ENCODE measurements at regions of chr6 and their contacts with region 1.

Region 1: DNA sequence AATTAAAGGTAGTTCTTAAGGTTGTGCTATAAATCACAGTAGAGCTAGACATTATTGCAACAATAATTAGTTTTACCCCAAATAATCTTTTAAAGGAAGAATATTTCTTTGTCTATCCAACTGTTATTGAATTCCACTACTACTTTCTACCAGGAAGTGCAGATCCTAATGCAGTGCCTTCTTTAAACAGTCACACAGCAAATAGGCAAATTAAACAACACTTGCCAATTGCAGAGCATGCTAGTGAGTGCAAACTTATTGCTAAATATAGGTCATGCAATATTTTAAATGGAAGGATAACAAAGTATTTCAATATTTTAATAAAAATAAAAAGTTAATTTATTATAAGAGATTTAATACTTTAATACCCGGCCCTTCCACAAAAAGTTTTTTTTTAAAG is 107.3 kb upstream of the BCLAF1 start:
- DNase-seq: no peak
- H3K4me3 ChIP-seq: no peak overlapping the region
- H3K27ac ChIP-seq: no peak overlapping the region
- H3K4me1 ChIP-seq: no peaks in the 10 kb centered on the region
- H3K27me3 ChIP-seq: no peaks in the 10 kb centered on the region
- CTCF ChIP-seq: no peak
- POLR2A ChIP-seq: no peak

Region 2: DNA sequence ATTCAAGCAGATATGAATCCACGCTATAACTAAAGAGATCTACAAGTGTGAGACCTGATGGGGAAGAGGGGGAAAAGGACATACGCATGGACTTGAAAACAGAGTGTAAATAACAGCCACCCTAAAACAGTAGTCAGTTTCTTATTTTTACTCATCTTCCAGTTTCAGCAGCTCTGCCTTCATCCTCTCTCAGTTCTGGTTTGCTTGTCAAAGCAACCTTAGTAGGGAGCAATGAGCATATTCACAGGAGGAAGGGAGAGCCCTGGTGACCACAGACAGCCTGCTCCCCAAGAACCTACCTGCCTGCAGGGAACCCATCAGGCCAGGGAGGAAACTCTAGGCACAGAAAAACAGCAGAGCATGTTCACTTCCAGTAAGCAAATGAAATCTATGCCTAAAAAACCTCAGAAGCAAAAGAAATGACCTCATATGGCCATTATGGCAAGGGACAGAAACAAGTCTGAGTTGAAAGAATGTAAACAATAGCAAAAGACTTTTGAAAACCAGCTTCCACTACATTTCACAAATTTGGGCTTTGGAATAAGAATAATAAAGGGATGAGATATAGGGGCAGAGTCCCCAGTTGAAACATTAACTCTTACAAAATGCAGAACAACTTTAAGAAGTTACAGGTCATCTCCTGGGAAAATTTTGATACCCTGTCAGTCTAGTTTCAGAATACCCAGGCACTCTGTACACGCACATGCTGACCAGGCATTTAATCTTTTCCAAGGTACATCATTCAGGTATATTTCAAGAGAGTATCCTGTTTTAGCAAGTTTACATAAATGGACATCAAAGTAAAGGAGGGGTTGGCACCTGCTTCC is 13.5 kb after region 1 on chr6:
- intact Hi-C with region 1: loop called (anchors 2 kb)
- DNase-seq: no peak
- H3K4me3 ChIP-seq: no peak overlapping the region
- H3K27ac ChIP-seq: peak overlapping the region in 1 of 2 donors; percentile 19
- H3K4me1 ChIP-seq: no peaks in the 10 kb centered on the region
- H3K27me3 ChIP-seq: no peaks in the 10 kb centered on the region
- CTCF ChIP-seq: no peak
- POLR2A ChIP-seq: no peak